Caco-2 (cell line): ENCODE measurements at regions of chr12 and their contacts with region 1.

Region 1: DNA sequence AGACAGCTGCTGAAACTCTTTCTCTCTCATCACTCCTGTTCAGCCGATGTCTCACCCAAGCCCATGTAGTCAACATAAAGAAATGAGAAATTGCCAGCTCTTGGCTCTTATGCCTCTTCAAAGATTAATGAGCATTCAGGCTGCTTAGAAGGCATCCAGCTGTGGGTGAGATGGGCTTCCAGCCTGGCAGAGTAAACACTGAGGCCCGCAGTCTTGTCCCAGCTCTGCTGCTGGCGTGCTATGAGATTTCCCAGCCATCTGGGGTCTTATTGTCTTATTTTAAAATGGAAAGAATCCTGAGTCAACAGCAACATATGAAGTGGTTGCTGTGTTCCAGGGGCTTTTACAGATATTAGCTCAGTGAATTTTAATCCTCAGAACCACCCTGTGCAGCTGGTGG is 12.6 kb downstream of the RXYLT1 start:
- DNase-seq: no peak
- H3K4me3 ChIP-seq: no peak overlapping the region
- H3K4me3 Mint-ChIP-seq: no peak overlapping the region
- H3K27ac Mint-ChIP-seq: no peak overlapping the region
- H3K4me1 ChIP-seq: no peaks in the 10 kb centered on the region
- H3K4me1 Mint-ChIP-seq: no peaks in the 10 kb centered on the region
- H3K27me3 ChIP-seq: no peaks in the 10 kb centered on the region
- H3K27me3 Mint-ChIP-seq: no peaks in the 10 kb centered on the region
- CTCF ChIP-seq: no peak

Region 2: GRCh38 chr12:63766498-63766897 is 25.8 kb before region 1 on chr12:
- CTCF ChIA-PET with region 1: no interaction called
- POLR2A ChIA-PET with region 1: no interaction called
- intact Hi-C with region 1: loop called (anchors 1 kb)
- DNase-seq: no peak
- H3K4me3 ChIP-seq: no peak overlapping the region
- H3K4me3 Mint-ChIP-seq: no peak overlapping the region
- H3K27ac Mint-ChIP-seq: no peak overlapping the region
- H3K4me1 ChIP-seq: no peaks in the 10 kb centered on the region
- H3K4me1 Mint-ChIP-seq: no peaks in the 10 kb centered on the region
- H3K27me3 ChIP-seq: no peaks in the 10 kb centered on the region
- H3K27me3 Mint-ChIP-seq: peaks cover 12% of the 10 kb centered on the region
- CTCF ChIP-seq: no peak